HEK293 (cell line): ENCODE measurements at regions of chr2 and their contacts with region 1.

Region 1: DNA sequence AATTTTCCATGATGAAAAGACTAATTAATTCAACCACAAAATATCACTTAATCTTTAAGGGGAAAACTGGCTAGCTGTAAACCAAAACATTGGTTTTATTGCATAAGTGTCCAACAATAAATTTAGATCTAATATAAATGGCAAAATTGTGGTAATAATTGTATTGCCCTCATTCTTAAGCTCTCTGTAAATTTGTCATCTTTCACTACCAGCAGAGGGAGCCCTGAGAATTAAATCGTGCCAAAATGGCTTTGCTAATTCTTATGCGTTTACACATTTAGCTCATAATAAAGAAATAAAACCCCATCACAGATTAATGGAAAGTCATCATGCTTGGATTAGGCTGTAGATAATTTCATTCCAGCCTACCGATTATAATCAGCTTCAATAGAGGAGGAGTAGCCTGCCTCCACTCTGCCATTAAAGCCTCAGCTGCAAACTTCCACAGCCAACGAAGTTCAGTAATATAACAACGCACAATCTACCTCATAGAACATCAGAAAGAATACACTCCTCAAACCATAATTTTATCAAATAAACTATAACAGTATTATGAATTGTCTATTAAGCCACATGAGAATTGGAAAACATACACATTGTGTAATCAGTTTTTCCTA is 70.0 kb upstream of the ATP5MC3 start:
- H3K4me3 ChIP-seq: no peak overlapping the region
- H3K27ac ChIP-seq: no peak overlapping the region
- H3K4me1 ChIP-seq: no peaks in the 10 kb centered on the region
- CTCF ChIP-seq: peak; percentile 25; the same call in 1 of the 2 replicates

Region 2: DNA sequence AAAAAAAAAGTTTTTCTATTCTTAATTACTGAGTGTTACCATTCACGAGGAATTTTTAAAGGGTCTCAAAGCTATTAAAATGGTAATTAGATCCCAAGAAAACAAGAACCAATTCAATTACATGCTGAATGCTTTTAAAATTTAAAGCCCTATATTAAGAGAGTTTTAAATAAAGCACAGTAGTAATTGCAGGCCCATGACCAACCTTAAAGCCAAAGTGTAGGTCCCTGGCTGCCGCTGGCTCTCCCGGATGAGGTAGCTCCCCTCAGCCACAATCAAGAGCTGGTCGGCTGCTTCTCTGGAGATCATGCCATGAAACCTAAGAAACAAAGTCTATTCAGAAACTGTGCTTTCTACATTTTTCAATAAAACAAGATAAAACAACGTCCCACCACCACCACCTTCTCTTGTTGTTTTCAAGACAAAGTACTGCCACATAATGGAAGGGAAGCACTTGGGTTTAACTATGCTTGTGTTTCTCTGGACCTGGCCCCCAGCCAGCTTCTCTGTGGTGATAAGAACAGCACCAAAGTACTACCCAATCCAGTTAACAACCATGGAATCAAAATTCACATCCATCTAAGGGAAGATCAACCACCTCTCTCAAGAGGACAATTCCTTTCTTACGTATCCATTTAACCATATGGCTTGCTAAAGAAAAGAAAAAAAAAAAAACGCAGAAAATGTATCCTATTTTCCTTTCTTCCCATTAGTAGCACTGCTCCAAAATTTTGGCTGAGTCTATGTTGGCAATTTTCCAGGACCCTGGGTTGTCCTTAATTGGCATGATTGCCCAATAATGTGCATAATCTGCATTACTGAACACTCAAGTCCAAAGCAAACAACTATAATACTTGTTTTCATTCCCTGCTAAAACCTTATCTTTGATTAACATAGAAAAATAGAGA is 336.4 kb before region 1 on chr2:
- CTCF ChIA-PET with region 1: no interaction called
- POLR2A ChIA-PET with region 1: no interaction called
- H3K4me3 ChIP-seq: no peak overlapping the region
- H3K27ac ChIP-seq: peak overlapping the region; percentile 74
- H3K4me1 ChIP-seq: peaks cover 25% of the 10 kb centered on the region
- CTCF ChIP-seq: no peak

Region 3: GRCh38 chr2:175203621-175204496 is 47.7 kb before region 1 on chr2:
- CTCF ChIA-PET with region 1: interaction called, 26 read pairs
- POLR2A ChIA-PET with region 1: no interaction called
- H3K4me3 ChIP-seq: no peak overlapping the region
- H3K27ac ChIP-seq: no peak overlapping the region
- H3K4me1 ChIP-seq: no peaks in the 10 kb centered on the region
- CTCF ChIP-seq: peak; percentile 57

Region 4: GRCh38 chr2:175233135-175233719 is 18.3 kb before region 1 on chr2:
- CTCF ChIA-PET with region 1: interaction called, 15 read pairs
- POLR2A ChIA-PET with region 1: no interaction called
- H3K4me3 ChIP-seq: no peak overlapping the region
- H3K27ac ChIP-seq: peak overlapping the region; percentile 61; the same call in 1 of the 2 replicates
- H3K4me1 ChIP-seq: peaks cover 17% of the 10 kb centered on the region
- CTCF ChIP-seq: no peak

Region 5: DNA sequence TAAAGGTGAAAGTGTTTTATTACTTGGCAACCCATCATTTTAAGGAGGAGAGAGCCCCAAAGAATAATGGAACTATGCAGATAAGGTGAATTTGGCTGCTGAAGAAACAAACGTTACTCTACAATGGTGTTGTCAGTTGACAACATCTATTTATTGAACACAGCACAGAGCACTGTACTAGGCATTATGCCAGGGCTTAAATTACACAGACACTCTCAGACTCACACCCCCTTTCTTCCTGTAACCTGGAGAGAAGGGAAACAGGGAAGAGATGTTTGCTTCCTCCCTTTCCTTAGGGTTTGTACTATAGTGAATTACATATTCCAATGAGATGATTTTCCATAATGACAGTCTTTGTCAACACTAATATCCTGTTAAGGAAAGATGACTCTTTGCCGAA is 24.0 kb after region 1 on chr2:
- CTCF ChIA-PET with region 1: interaction called, 129 read pairs
- POLR2A ChIA-PET with region 1: no interaction called
- H3K4me3 ChIP-seq: no peak overlapping the region
- H3K27ac ChIP-seq: no peak overlapping the region
- H3K4me1 ChIP-seq: peaks cover 7% of the 10 kb centered on the region
- CTCF ChIP-seq: no peak

Region 6: DNA sequence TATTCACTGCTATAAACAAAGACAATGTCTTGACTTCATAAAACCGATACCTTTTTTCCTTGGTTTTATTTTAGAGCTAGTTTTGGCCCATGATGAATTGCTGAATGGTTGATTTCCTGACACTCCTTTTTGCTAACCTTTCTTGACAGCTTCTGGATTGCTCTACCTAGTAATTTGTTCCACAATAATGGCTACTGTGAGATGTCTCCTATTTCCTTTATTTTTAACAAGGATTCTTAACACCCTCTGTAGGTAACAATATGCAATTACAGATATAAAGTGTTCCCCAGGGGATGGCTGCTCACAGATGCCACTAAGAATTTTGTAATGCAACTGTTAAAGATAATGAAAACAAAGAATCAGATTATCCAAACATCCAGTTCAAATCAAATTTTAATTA is 30.8 kb after region 1 on chr2:
- CTCF ChIA-PET with region 1: interaction called, 129 read pairs
- POLR2A ChIA-PET with region 1: no interaction called
- H3K4me3 ChIP-seq: no peak overlapping the region
- H3K27ac ChIP-seq: no peak overlapping the region
- H3K4me1 ChIP-seq: no peaks in the 10 kb centered on the region
- CTCF ChIP-seq: peak; percentile 16; the same call in 1 of the 2 replicates

Region 7: GRCh38 chr2:175326801-175327200 is 75.3 kb after region 1 on chr2:
- CTCF ChIA-PET with region 1: interaction called, 28 read pairs
- POLR2A ChIA-PET with region 1: no interaction called
- H3K4me3 ChIP-seq: no peak overlapping the region
- H3K27ac ChIP-seq: no peak overlapping the region
- H3K4me1 ChIP-seq: no peaks in the 10 kb centered on the region
- CTCF ChIP-seq: no peak

Region 8: GRCh38 chr2:175463589-175464310 is 212.2 kb after region 1 on chr2:
- CTCF ChIA-PET with region 1: no interaction called
- POLR2A ChIA-PET with region 1: no interaction called
- H3K4me3 ChIP-seq: no peak overlapping the region
- H3K27ac ChIP-seq: no peak overlapping the region
- H3K4me1 ChIP-seq: no peaks in the 10 kb centered on the region
- CTCF ChIP-seq: no peak